ENCODE measurements at regions of chr2 and their contacts with region 1.

Region 1: GRCh38 chr2:200713003-200713703 is 98.6 kb upstream of the BZW1 start:
- DNase-seq: peak; percentile 80

Region 2: DNA sequence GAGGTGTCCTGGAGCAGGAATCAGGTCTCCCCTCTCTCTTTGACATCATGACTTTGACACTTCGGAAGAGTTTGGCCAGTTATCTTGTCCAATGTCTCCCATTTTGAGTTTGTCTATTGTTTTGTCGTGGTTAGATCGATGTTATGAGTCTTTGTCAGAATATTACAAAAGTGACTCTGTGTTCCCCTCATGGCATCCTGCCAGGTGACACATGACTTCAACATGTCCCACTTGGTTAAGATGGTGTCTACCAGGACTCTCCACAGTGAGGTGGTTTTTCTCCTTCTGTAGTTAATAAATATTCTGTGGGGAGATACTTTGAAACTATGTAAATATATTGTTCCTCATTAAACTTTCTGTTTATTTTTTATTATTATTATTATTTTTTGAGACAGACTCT is 21.9 kb after region 1 on chr2:
- CTCF ChIA-PET with region 1: interaction called, 14 read pairs
- POLR2A ChIA-PET with region 1: no interaction called
- DNase-seq: no peak

Region 3: GRCh38 chr2:200850512-200851256 is 137.5 kb after region 1 on chr2:
- CTCF ChIA-PET with region 1: interaction called, 11 read pairs
- POLR2A ChIA-PET with region 1: no interaction called
- DNase-seq: no peak

Region 4: DNA sequence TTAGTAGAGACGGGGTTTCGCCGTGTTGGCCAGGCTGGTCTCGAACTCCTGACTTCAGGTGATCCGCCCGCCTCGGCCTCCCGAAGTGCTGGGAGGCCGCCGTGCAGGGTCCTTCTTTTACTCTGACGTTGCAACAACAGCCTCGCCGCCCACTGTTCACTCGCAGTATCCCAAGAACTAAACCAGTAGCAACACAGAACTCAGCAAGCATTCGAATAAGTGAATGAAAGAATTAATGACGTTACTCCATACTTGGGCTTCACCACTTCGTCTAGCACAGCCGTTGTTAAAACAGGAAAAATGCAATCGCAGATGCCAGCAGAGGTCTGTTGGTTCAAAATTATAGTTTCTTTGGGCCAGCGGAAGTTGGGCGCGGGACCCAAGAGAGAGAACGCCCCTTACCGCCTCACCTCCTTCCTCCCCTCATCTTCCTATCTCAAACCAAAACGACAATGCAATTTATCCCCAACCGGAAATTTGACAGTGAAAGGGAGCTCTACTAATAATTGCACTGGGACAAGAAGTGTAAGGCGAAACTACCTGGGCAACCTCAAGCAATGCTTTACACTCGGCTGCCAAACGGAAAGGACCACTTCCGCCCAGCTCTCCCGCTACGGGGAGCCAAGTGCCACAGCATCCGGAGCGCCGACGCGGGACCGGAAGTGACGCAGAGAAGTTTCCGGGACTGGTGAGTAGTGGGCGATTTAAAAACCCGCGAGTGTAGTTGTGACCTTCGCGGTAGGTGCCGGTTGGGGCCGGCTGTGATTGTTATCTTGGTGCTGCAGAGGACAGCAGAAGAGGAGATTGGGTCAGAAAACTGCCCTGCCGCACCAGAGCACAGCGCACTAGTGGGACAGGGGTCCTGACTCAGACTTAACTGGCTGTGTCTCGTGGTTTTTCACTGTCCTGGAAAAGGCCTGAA is 175.8 kb after region 1 on chr2 and contains the starts of genes NIF3L1 and PPIL3:
- CTCF ChIA-PET with region 1: no interaction called
- POLR2A ChIA-PET with region 1: interaction called, 11 read pairs
- DNase-seq: peak; percentile 92

Measured in HEK293T (cell line).